Endothelial cell of umbilical vein (primary cell): ENCODE measurements at regions of chr1 and their contacts with region 1.

Region 1: DNA sequence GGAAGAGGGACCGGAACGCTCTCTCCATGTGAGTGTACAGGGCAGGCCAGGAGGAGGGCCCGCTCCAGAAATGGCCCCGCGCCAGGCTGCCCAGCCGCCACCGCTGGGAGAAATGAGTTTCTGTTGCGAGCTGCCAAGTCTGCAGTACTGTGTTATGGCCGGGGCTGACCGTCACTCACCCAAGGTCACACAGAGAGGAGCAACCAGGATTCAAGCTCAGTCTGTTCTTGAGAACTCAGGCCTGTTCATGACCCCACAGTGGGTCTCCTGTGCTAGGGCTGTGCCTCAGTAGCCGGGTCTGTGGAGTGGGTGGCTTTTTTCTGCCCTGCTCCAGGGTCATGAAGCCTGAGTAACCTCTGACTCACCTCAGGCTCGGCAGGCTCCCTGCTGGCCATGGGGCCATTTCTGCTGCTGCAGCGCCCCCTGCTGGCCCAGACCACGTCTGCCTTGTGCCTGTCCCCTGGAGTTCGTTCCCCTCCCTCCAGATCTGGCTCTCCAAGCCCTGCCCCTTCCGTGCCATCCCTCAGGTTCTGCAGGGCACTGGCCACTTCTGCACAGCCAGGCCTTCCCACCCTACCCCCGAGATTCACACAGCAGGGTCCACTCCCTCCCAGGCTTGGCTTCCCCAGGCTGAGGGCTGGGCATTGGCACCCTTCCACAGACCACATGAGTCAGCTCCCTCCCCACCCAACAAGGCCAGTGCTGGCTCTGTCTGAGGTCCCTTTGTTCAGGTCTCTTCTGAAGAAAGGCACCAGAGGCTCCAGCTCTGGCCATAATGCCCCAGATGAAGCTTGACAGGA is 51.8 kb downstream of the EDN2 start:
- DNase-seq: peak; percentile 84
- H3K4me3 ChIP-seq: no peak overlapping the region
- H3K27ac ChIP-seq: no peak overlapping the region
- H3K4me1 ChIP-seq: peaks cover 27% of the 10 kb centered on the region
- H3K27me3 ChIP-seq: peaks cover 2 to 4% of the 10 kb centered on the region in 2 experiments
- CTCF ChIP-seq: peak; percentile 93 to 96
- POLR2A ChIP-seq: no peak

Region 2: GRCh38 chr1:41023279-41023990 is 409.2 kb before region 1 on chr1:
- CTCF ChIA-PET with region 1: no interaction called
- POLR2A ChIA-PET with region 1: no interaction called
- dilution Hi-C with region 1: no loop called
- intact Hi-C with region 1: loop called (anchors 5 kb)
- DNase-seq: no peak
- H3K4me3 ChIP-seq: no peak overlapping the region
- H3K27ac ChIP-seq: no peak overlapping the region
- H3K4me1 ChIP-seq: peaks cover 27% of the 10 kb centered on the region
- H3K27me3 ChIP-seq: no peaks in the 10 kb centered on the region
- CTCF ChIP-seq: peak; percentile 31 to 59
- POLR2A ChIP-seq: no peak

Region 3: DNA sequence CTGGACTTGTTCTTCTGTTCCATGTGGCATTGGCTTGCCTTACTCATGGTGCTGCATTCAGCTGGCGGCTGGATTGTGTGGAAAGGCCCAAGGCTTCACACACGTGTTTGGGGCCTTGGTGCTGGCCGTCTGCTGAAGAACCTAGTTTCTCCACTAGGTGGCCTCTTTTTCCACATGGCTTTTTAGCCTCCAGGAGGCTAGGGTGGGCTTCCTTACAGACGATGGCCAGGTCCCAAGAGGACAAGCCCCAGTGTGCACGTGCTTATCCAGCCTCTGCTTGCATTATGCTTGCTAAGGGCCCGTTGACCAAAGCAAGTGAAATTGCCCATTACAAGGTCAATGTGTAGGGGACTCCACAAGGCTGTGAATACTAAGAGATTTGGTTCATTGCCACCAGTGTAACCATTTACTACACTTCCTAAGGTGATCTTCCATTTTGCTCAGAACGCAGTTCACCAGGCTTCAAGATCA is 119.0 kb before region 1 on chr1:
- CTCF ChIA-PET with region 1: interaction called, 8 read pairs
- POLR2A ChIA-PET with region 1: no interaction called
- dilution Hi-C with region 1: no loop called
- intact Hi-C with region 1: loop called (anchors 1 kb)
- DNase-seq: peak; percentile 30
- H3K4me3 ChIP-seq: no peak overlapping the region
- H3K27ac ChIP-seq: no peak overlapping the region
- H3K4me1 ChIP-seq: no peaks in the 10 kb centered on the region
- H3K27me3 ChIP-seq: peaks cover 0 to 14% of the 10 kb centered on the region in 2 experiments
- CTCF ChIP-seq: peak; percentile 61 to 72
- POLR2A ChIP-seq: no peak

Region 4: DNA sequence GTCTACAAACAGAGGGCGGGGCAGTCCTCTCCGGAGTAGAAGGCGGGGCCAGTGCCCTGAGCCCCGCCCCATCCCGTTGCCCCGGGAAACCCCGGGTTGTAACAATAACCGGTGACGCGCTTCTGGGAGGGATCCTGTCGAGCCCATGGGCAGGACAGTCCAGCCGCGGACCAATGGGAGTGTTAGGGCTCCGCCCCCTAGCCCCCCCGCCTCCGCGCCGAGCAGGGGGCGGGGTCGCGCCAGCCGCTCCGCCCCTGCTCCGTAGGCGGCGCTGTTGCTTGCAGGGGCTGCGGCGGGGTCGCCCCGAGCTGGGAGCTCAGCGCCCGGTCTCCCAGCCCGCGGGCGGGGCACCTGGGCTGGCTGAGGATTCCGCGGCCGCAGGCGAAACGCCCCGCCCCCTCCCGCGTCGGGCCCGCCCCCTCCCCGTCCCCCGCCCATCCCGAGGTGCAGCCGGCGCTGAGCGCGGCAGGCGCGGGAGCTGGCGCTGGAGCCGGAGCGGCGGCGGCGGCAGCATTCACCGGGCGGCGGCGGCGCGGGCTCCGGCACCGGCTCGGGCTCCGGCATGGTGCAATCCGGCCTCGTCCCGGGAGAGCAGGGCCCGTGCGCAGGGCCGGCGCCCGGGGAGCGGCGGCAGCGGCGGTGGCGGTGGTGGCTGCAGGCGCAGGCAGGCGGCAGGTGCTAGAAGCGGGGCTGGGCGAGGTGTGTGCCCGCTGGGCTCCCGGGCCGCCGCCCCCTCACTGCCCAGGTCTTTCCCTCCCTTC is 71.5 kb before region 1 on chr1 and contains the start of gene FOXO6:
- CTCF ChIA-PET with region 1: interaction called, 8 read pairs
- POLR2A ChIA-PET with region 1: no interaction called
- dilution Hi-C with region 1: no loop called
- intact Hi-C with region 1: loop called (anchors 1 kb)
- DNase-seq: peak; percentile 96
- H3K4me3 ChIP-seq: peak within 1 kb of the TSS in 2 of 3 experiments; percentile 32 to 36
- H3K27ac ChIP-seq: no peak within 1 kb of the TSS
- H3K4me1 ChIP-seq: peaks cover 3% of the 10 kb centered on the region
- H3K27me3 ChIP-seq: peaks cover 14 to 22% of the 10 kb centered on the region in 2 experiments
- CTCF ChIP-seq: peak; percentile 47 to 59
- POLR2A ChIP-seq: no peak
- total RNA-seq, gene FOXO6: 0.18 and 0.38 TPM in 2 replicates

Region 5: DNA sequence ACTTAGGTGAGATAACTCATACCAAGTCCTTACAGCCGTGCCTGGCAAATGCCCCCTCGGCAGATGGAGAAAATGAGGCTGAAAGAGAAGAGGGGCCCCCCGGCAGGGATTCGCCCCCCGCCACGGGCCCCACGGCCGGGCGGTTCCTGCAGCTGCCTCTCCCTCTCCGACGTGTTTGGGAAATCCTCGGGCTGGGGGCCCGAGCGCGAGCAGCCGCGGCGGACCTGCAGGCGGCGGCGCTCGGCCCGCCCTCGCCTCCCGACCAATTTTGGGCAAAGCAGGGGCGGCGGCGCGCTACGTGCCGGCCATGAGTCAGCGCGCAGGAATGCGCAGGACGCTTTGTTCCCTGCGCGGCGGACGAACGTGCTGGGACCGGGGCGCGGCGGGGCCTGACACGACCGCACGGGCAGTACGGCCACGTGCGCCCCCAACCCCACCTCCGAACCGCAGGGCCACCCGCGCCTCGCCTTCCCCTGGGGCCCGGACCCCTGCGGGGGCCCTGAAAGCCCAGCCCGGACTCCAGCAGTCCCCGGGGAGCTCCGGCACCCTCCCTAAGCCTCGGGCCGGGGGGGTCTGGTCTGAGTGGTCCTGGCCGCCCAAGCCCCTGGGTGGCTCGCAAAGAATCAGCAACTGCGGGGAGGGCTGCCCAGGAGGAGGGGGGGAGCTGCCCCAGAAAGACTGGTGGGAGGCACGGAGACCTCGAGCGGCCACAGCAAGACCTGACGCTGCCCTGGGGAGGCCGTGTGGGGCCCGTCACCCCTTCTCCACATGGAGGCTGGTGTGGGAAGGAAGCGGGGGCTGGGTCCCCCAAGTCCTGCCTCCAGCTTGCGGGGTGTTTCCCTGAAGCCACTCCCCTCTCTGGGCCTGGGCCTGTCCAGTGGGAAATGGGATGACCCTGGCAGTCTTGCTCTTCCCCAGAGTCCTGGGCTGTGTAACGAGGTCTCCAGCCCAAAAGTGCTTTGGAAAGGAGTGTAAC is 63.7 kb after region 1 on chr1:
- CTCF ChIA-PET with region 1: interaction called, 16 read pairs
- POLR2A ChIA-PET with region 1: no interaction called
- dilution Hi-C with region 1: no loop called
- intact Hi-C with region 1: no loop called
- DNase-seq: peak; percentile 60
- H3K4me3 ChIP-seq: peak overlapping the region in 2 of 3 experiments; percentile 12 to 27
- H3K27ac ChIP-seq: peak overlapping the region; percentile 88
- H3K4me1 ChIP-seq: peaks cover 22% of the 10 kb centered on the region
- H3K27me3 ChIP-seq: no peaks in the 10 kb centered on the region
- CTCF ChIP-seq: no peak
- POLR2A ChIP-seq: no peak